ENCODE measurements at regions of chr4 and their contacts with region 1.

Region 1: GRCh38 chr4:124111922-124112321 is 600.6 kb downstream of the ANKRD50 start:
- DNase-seq: no peak
- ATAC-seq: peak; percentile 76 to 94 (median 90)
- H3K4me3 ChIP-seq: no peak overlapping the region
- H3K27ac ChIP-seq: no peak overlapping the region
- H3K4me1 ChIP-seq: peaks cover 7% of the 10 kb centered on the region
- H3K27me3 ChIP-seq: no peaks in the 10 kb centered on the region
- CTCF ChIP-seq: peak; percentile 72

Region 2: GRCh38 chr4:123096038-123096437 is 1015.9 kb before region 1 on chr4:
- intact Hi-C with region 1: loop called (anchors 5 to 10 kb)
- DNase-seq: no peak
- ATAC-seq: no peak
- H3K4me3 ChIP-seq: no peak overlapping the region
- H3K27ac ChIP-seq: no peak overlapping the region
- H3K4me1 ChIP-seq: no peaks in the 10 kb centered on the region
- H3K27me3 ChIP-seq: no peaks in the 10 kb centered on the region
- CTCF ChIP-seq: no peak

Region 3: GRCh38 chr4:123127218-123127617 is 984.7 kb before region 1 on chr4:
- intact Hi-C with region 1: loop called in 1 of 2 experiments (anchors 5 kb)
- DNase-seq: no peak
- ATAC-seq: no peak
- H3K4me3 ChIP-seq: no peak overlapping the region
- H3K27ac ChIP-seq: no peak overlapping the region
- H3K4me1 ChIP-seq: no peaks in the 10 kb centered on the region
- H3K27me3 ChIP-seq: no peaks in the 10 kb centered on the region
- CTCF ChIP-seq: peak; percentile 37

Region 4: DNA sequence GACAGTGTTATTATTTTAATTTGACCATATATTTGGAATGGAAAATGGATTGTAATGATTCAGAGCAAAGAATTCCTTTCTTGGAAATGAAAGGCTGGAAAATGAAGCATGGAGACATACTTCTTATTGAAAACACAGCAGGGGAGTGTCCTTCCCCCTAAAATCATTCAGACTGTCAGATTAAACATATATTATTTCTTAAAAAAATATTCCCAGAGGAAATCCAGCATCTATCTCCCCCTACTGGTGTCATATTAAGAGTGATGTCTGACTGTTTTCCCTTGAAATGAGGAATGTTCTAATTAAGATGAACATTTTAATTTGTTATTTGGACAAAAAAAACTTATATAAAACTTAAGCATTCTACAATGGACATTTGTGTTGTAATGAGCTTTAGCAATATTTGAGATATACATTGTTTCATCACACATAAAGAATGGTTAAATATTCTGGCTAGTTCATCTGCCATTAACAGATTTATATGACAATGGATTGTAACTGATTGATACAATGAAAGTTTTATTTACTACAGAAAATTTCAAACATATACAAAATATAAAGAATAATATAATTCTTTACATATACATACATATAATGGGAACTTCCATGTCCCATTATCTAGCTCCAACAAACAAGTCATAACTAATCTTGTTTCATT is 450.7 kb before region 1 on chr4:
- intact Hi-C with region 1: loop called in 1 of 2 experiments (anchors 10 kb)
- DNase-seq: no peak
- ATAC-seq: peak in 1 of 4 donors; percentile 56
- H3K4me3 ChIP-seq: no peak overlapping the region
- H3K27ac ChIP-seq: no peak overlapping the region
- H3K4me1 ChIP-seq: peaks cover 6% of the 10 kb centered on the region
- H3K27me3 ChIP-seq: no peaks in the 10 kb centered on the region
- CTCF ChIP-seq: peak; percentile 64

Region 5: GRCh38 chr4:124262211-124263179 is 150.6 kb after region 1 on chr4:
- intact Hi-C with region 1: loop called in 1 of 2 experiments (anchors 10 kb)
- DNase-seq: peak in 1 of 2 donors; percentile 25
- ATAC-seq: peak; percentile 64 to 91 (median 88)
- H3K4me3 ChIP-seq: no peak overlapping the region
- H3K27ac ChIP-seq: no peak overlapping the region
- H3K4me1 ChIP-seq: no peaks in the 10 kb centered on the region
- H3K27me3 ChIP-seq: no peaks in the 10 kb centered on the region
- CTCF ChIP-seq: peak; percentile 87